Naive thymus-derived CD4-positive, alpha-beta T cell (primary cell): ENCODE measurements at regions of chr7 and their contacts with region 1.

Region 1: DNA sequence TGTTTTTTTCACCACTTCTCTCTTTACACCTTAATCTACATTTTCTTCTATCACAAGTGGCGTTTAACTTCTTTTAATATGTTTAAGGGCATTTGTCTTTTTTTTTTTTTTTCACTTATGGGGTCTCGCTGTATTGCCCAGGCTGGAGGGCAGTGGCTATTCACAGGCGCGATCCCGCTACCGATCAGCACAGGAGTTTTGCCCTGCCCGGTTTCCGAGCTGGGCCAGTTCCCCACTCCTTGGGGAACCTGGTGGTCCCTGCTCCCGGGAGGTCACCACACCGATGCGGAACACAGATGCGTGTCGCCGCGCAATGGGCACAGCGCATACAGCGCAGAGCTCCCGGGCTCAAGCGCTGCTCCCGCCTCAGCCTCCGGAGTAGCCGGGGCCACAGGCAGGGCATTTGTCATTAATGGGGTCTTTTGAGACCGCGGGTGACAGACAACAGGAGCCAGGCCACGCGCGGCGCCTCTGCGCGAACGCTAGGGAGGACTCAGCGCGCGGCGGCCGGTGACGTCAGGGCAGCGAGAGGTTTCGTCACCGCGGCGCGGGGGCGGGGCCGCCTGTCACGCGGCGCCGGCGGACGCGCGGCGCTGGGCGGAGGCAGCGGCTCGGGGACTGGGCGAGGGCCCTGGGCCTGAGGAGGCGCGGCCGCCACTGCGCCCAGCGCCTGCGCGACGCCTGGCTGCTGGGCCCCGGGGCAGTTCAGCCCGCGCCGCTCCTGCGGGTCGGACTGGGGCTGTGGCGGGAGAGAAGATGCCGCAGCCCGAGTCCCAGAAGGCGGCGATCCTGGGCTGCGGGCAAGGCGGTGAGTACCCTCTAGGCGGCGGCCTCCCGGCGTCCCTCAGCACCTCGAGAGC is at the start of gene GALNT11:
- DNase-seq: peak; percentile 82 to 95 (median 91)
- ATAC-seq: peak; percentile 96
- H3K4me3 ChIP-seq: peak within 1 kb of the TSS; percentile 75
- H3K4me3 Mint-ChIP-seq: peak within 1 kb of the TSS; percentile 85 to 92 (median 88)
- H3K27ac ChIP-seq: peak within 1 kb of the TSS; percentile 88
- H3K27ac Mint-ChIP-seq: peak within 1 kb of the TSS; percentile 85 to 96 (median 95)
- H3K4me1 ChIP-seq: peaks cover 7 to 22% of the 10 kb centered on the region in 2 donors
- H3K4me1 Mint-ChIP-seq: peaks cover 12 to 45% (median 39%) of the 10 kb centered on the region in 7 donors
- H3K27me3 ChIP-seq: no peaks in the 10 kb centered on the region
- H3K27me3 Mint-ChIP-seq: peaks cover 0 to 11% (median 0%) of the 10 kb centered on the region in 5 donors
- total RNA-seq, gene GALNT11: 16.0 to 29.5 (median 17.9) TPM

Region 2: GRCh38 chr7:152048051-152048450 is 22.7 kb after region 1 on chr7:
- CTCF ChIA-PET with region 1: no interaction called
- POLR2A ChIA-PET with region 1: no interaction called
- intact Hi-C with region 1: no loop called
- DNase-seq: no peak
- ATAC-seq: no peak
- H3K4me3 ChIP-seq: no peak overlapping the region
- H3K4me3 Mint-ChIP-seq: no peak overlapping the region
- H3K27ac ChIP-seq: no peak overlapping the region
- H3K27ac Mint-ChIP-seq: no peak overlapping the region
- H3K4me1 ChIP-seq: no peaks in the 10 kb centered on the region
- H3K4me1 Mint-ChIP-seq: peaks cover 14 to 35% (median 23%) of the 10 kb centered on the region in 7 donors
- H3K27me3 ChIP-seq: no peaks in the 10 kb centered on the region
- H3K27me3 Mint-ChIP-seq: no peaks in the 10 kb centered on the region

Region 3: DNA sequence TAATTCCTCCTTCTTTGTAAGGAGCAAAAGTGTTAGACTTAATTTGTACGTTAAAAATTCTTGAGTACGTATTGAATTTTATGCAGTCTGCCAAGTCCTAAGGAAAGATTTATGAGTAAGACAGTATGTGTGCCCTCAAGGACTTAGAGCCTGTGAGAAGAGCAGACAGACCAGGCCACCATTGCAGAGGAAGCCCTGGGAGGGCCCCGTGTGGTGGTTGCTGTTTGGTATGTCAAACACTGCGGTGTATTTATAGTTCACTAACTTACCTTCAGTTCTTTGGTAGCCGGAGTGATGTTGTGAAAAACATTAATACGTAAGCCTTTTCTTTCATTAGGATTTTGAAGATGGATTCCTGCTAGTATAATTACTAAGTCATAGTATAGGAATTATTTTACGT is 83.1 kb after region 1 on chr7:
- CTCF ChIA-PET with region 1: no interaction called
- POLR2A ChIA-PET with region 1: no interaction called
- intact Hi-C with region 1: loop called in 1 of 2 experiments (anchors 5 kb)
- DNase-seq: no peak
- ATAC-seq: no peak
- H3K4me3 ChIP-seq: no peak overlapping the region
- H3K4me3 Mint-ChIP-seq: no peak overlapping the region
- H3K27ac ChIP-seq: no peak overlapping the region
- H3K27ac Mint-ChIP-seq: no peak overlapping the region
- H3K4me1 ChIP-seq: no peaks in the 10 kb centered on the region
- H3K4me1 Mint-ChIP-seq: peaks cover 4 to 9% (median 8%) of the 10 kb centered on the region in 7 donors
- H3K27me3 ChIP-seq: no peaks in the 10 kb centered on the region
- H3K27me3 Mint-ChIP-seq: no peaks in the 10 kb centered on the region

Region 4: GRCh38 chr7:152463709-152464311 is 438.5 kb after region 1 on chr7:
- CTCF ChIA-PET with region 1: no interaction called
- POLR2A ChIA-PET with region 1: no interaction called
- intact Hi-C with region 1: loop called in 1 of 2 experiments (anchors 10 kb)
- DNase-seq: peak; percentile 99 to 100 (median 100)
- ATAC-seq: peak; percentile 96
- H3K4me3 ChIP-seq: peak overlapping the region; percentile 82
- H3K4me3 Mint-ChIP-seq: peak overlapping the region; percentile 64 to 96 (median 92)
- H3K27ac ChIP-seq: peak overlapping the region; percentile 99
- H3K27ac Mint-ChIP-seq: peak overlapping the region in 7 of 9 donors; percentile 62 to 93 (median 88)
- H3K4me1 ChIP-seq: peaks cover 5% of the 10 kb centered on the region in 2 donors
- H3K4me1 Mint-ChIP-seq: peaks cover 5 to 17% (median 7%) of the 10 kb centered on the region in 7 donors
- H3K27me3 ChIP-seq: no peaks in the 10 kb centered on the region
- H3K27me3 Mint-ChIP-seq: no peaks in the 10 kb centered on the region

Region 5: DNA sequence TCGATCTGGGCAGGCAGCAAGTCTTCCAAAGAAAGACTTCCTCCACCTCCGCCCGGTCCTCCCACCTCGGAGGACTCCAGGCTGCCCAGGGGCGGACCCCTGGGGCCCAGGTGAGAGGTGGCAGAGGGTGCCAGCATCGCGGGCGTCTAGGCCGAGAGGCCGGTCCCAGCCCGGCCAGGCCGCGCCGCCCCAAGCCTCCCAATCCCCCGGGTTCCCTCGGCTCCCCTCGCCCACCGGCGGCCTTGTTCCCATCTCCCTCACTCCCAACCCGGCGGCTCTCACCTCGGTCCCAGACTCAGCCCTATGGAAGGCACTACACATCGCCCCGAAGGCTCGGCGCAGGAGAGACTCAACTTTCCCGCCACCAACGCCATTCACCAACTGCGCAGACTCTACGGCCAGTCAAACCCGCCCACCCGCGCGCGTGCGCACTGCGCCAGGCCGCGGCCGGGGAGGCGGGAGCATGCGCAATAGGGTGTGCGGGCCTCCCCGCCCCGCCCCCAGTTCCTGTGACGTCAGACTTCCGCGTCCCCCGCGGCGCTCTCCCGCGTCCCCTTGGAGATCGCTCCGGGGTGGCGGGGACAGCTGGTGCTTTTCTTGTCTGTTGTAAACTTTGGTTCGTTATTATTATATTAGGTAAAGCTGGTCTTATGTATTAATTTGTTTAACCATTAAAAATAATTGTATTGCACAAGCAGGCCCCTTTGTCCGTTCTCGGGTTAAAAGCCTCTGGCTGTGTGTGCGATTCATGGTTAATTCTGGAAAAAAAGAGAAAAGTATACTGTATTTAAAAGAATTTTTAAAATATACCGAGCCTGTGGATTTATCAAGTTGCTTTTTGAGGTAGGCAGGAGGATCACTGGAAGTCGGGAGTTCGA is 650.7 kb after region 1 on chr7 and contains the start of gene XRCC2:
- CTCF ChIA-PET with region 1: no interaction called
- POLR2A ChIA-PET with region 1: no interaction called
- intact Hi-C with region 1: loop called in 1 of 2 experiments (anchors 1 kb)
- DNase-seq: peak; percentile 85 to 100 (median 97)
- ATAC-seq: peak; percentile 95
- H3K4me3 ChIP-seq: peak within 1 kb of the TSS; percentile 91
- H3K4me3 Mint-ChIP-seq: peak within 1 kb of the TSS; percentile 88 to 99 (median 94)
- H3K27ac ChIP-seq: peak within 1 kb of the TSS; percentile 87
- H3K27ac Mint-ChIP-seq: peak within 1 kb of the TSS; percentile 75 to 98 (median 91)
- H3K4me1 ChIP-seq: peaks cover 5 to 8% of the 10 kb centered on the region in 2 donors
- H3K4me1 Mint-ChIP-seq: peaks cover 9 to 22% (median 12%) of the 10 kb centered on the region in 7 donors
- H3K27me3 ChIP-seq: no peaks in the 10 kb centered on the region
- H3K27me3 Mint-ChIP-seq: no peaks in the 10 kb centered on the region
- total RNA-seq, gene XRCC2: 0.48 to 13.8 (median 1.2) TPM

Region 6: GRCh38 chr7:152709287-152710152 is 684.2 kb after region 1 on chr7:
- CTCF ChIA-PET with region 1: no interaction called
- POLR2A ChIA-PET with region 1: no interaction called
- intact Hi-C with region 1: loop called in 1 of 2 experiments (anchors 1 kb)
- DNase-seq: no peak
- ATAC-seq: no peak
- H3K4me3 ChIP-seq: no peak overlapping the region
- H3K4me3 Mint-ChIP-seq: no peak overlapping the region
- H3K27ac ChIP-seq: no peak overlapping the region
- H3K27ac Mint-ChIP-seq: no peak overlapping the region
- H3K4me1 ChIP-seq: no peaks in the 10 kb centered on the region
- H3K4me1 Mint-ChIP-seq: peaks cover 0 to 9% (median 3%) of the 10 kb centered on the region in 7 donors
- H3K27me3 ChIP-seq: no peaks in the 10 kb centered on the region
- H3K27me3 Mint-ChIP-seq: peaks cover 0 to 3% (median 0%) of the 10 kb centered on the region in 5 donors

Region 7: DNA sequence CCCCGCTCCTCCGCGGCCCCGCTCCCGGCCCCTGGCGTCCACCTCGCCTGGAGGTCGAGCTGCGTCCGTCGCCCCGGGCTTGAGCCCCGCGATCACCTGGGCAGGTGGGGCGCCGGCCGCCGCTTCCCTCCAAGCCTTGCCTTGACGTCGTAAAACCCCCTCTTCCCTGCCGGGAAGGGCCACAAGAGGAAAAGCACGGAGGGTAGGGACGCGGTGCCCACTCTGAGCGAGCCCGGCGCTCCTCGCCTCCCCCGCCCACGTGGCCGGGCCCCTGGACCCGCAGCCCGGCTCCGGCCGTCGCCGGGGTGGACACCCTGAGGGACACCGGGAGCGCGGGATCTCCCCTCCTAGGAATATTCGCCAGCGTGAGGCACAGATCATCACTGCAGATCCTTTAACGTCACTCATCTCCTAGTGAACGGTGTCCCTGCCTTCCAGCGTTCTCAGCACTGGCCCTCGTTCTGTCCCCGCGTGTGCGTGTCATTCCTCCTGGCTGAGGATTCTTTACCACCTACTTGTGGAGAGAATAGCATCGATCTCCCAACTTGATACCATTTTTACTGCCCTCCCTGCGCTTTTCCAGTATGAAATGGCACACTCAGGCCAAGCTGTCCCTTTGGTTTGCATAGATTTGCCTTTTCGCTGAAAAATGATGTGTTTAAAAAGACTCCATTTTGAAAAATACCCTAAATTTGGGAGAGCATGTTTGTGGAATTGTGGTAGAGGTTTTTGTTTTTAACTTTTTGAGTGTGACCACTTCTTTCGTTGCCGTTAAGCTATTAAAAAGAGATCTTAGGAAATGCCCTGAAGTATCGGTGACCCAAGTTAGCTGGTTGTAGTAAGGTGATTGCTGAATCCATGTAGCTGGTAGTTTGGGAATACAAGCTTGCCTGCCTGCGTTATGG is 734.9 kb after region 1 on chr7:
- CTCF ChIA-PET with region 1: no interaction called
- POLR2A ChIA-PET with region 1: no interaction called
- intact Hi-C with region 1: loop called (anchors 2 kb)
- DNase-seq: peak in 5 of 9 donors; percentile 12 to 53 (median 22)
- ATAC-seq: peak; percentile 26
- H3K4me3 ChIP-seq: peak overlapping the region; percentile 68
- H3K4me3 Mint-ChIP-seq: peak overlapping the region; percentile 85 to 94 (median 90)
- H3K27ac ChIP-seq: peak overlapping the region; percentile 93
- H3K27ac Mint-ChIP-seq: peak overlapping the region; percentile 63 to 97 (median 88)
- H3K4me1 ChIP-seq: peaks cover 6 to 11% of the 10 kb centered on the region in 2 donors
- H3K4me1 Mint-ChIP-seq: peaks cover 9 to 27% (median 20%) of the 10 kb centered on the region in 7 donors
- H3K27me3 ChIP-seq: no peaks in the 10 kb centered on the region
- H3K27me3 Mint-ChIP-seq: peaks cover 0 to 3% (median 0%) of the 10 kb centered on the region in 5 donors